ENCODE measurements at regions of chr12 and their contacts with region 1.

Region 1: GRCh38 chr12:71426300-71427047 is 13.1 kb upstream of the LGR5 start:
- DNase-seq: no peak
- H3K4me3 ChIP-seq: no peak overlapping the region
- CTCF ChIP-seq: no peak
- POLR2A ChIP-seq: no peak

Region 2: GRCh38 chr12:71636704-71637115 is 210.2 kb after region 1 on chr12:
- intact Hi-C with region 1: loop called (anchors 10 kb)
- DNase-seq: no peak
- H3K4me3 ChIP-seq: no peak overlapping the region
- CTCF ChIP-seq: no peak
- POLR2A ChIP-seq: no peak